Naive thymus-derived CD4-positive, alpha-beta T cell (primary cell): ENCODE measurements at regions of chr22 and their contacts with region 1.

Region 1: GRCh38 chr22:19043121-19044055 is 78.8 kb downstream of the DGCR2 start:
- DNase-seq: no peak
- ATAC-seq: no peak
- H3K4me3 ChIP-seq: no peak overlapping the region
- H3K4me3 Mint-ChIP-seq: no peak overlapping the region
- H3K27ac ChIP-seq: no peak overlapping the region
- H3K27ac Mint-ChIP-seq: peak overlapping the region in 1 of 9 donors; percentile 33
- H3K4me1 ChIP-seq: no peaks in the 10 kb centered on the region
- H3K4me1 Mint-ChIP-seq: no peaks in the 10 kb centered on the region
- H3K27me3 ChIP-seq: no peaks in the 10 kb centered on the region
- H3K27me3 Mint-ChIP-seq: no peaks in the 10 kb centered on the region

Region 2: DNA sequence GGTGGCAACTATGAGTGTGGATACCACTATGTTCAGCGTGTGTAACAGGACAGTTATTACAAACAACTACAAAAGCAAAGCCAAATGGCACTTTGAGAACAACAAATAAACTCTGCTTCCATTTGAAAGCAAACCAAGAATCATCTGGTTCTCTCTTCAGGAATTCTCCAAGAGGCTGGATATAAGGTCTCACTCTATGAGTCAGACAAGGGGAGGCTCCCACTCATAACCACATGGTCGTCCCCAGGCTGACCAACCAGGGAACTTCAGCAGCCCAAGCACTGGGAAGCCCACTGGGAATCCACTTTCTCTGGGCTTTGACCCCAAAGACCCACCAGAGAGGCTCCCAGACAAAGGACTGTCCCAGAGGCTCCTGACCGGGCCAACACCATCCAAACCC is 43.5 kb after region 1 on chr22:
- CTCF ChIA-PET with region 1: no interaction called
- POLR2A ChIA-PET with region 1: no interaction called
- intact Hi-C with region 1: loop called in 1 of 2 experiments (anchors 1 kb)
- DNase-seq: no peak
- ATAC-seq: no peak
- H3K4me3 ChIP-seq: no peak overlapping the region
- H3K4me3 Mint-ChIP-seq: no peak overlapping the region
- H3K27ac ChIP-seq: no peak overlapping the region
- H3K27ac Mint-ChIP-seq: peak overlapping the region in 1 of 9 donors; percentile 83
- H3K4me1 ChIP-seq: no peaks in the 10 kb centered on the region
- H3K4me1 Mint-ChIP-seq: peaks cover 7 to 54% (median 48%) of the 10 kb centered on the region in 7 donors
- H3K27me3 ChIP-seq: no peaks in the 10 kb centered on the region
- H3K27me3 Mint-ChIP-seq: no peaks in the 10 kb centered on the region

Region 3: DNA sequence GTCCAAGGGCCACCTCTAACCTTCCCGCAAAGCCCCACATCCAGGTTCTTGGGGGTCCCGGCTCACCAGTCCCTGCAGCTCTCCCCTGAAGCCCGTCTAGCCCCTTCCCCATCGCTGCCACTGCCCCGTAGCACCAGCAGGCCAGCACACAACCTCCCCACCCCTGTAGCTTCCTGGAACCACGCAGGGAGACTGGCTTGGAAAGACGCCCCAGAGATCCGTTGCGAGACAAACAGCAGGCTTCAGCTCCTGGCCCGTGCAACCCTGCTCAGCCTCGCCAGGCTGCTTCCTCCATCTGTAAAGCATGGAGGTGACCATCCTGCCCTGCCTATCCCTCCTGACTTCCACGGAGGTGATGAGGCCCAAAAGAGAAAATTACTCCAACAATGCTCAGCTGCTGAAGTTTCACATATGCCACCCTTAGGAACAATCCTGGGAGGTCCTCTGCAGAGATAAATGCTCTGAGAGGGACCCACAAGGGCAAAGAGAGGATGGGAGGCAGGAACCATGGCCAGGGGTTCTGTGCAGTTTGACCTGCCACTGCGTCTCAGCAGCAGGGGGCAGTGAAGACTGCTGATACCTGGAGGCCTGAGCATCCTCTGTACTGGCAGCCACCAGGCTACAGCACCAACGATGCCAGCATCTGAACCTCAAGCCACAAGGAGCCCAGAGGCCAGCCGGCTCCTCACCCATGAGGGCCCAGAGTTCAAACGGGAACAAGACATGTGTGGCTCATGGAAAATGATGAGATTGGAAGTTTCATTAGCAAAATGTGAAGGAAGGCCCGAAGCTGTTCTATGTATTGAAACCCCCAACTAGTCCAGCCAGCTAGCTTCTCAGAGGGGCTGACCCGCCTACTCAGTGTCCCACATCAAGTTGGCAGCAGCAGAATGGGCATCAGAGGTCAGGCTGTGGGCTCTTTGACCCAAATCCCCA is 62.7 kb after region 1 on chr22:
- CTCF ChIA-PET with region 1: no interaction called
- POLR2A ChIA-PET with region 1: no interaction called
- intact Hi-C with region 1: no loop called
- DNase-seq: peak in 7 of 9 donors; percentile 48 to 65 (median 61)
- ATAC-seq: peak; percentile 60
- H3K4me3 ChIP-seq: no peak overlapping the region
- H3K4me3 Mint-ChIP-seq: peak overlapping the region in 9 of 10 donors; percentile 30 to 86 (median 59)
- H3K27ac ChIP-seq: peak overlapping the region; percentile 24
- H3K27ac Mint-ChIP-seq: peak overlapping the region; percentile 68 to 100 (median 97)
- H3K4me1 ChIP-seq: peaks cover 35 to 45% of the 10 kb centered on the region in 2 donors
- H3K4me1 Mint-ChIP-seq: peaks cover 50 to 83% (median 75%) of the 10 kb centered on the region in 7 donors
- H3K27me3 ChIP-seq: no peaks in the 10 kb centered on the region
- H3K27me3 Mint-ChIP-seq: no peaks in the 10 kb centered on the region